ENCODE measurements at regions of chr12 and their contacts with region 1.

Region 1: DNA sequence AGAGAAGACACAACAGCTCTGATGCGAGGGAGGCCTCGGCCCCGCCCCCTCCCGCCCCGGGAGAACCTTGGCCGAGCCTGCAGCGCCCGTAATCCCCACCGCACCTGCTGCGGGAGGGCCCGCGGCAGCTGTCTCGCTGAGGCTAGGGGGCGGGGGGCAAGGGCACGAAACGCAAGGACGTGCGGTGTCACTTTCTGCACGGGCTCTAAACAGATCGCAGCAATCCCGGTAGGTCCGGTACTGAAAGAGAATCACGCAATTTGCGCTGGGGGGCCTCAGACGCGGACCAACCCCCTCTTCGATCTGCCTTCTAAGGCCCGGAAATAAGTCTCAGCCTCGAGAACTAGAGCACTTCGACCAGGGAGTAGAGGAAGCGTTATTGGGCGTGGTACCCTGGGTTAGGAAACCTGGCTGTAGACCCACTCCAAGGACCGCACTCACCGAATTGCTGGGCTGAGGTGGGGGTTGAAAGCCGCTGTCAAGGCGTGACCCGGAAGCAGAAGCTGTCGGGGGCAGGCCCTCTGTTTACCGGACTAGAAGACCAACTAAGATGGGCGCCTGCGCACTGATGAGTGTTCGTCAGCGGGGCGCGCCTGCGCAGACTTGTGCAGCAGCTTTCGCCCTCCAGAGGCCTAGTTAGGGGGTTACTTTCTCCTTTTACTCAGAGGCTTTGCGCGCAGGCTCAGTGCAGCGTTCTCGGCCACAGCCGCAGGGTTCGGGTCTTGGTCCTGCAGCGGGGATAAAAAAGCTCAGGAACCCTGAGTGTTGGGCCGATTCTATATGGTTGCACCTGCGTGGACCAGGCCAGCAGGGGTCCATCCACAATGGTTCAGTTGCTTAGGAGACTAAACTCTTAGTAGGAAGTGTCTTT is at the start of gene ASB8:
- H3K4me3 ChIP-seq: peak within 1 kb of the TSS; percentile 86
- H3K27ac ChIP-seq: peak within 1 kb of the TSS; percentile 70
- H3K4me1 ChIP-seq: no peaks in the 10 kb centered on the region
- CTCF ChIP-seq: peak; percentile 45

Region 2: GRCh38 chr12:47812797-47813510 is 344.3 kb before region 1 on chr12:
- CTCF ChIA-PET with region 1: no interaction called
- POLR2A ChIA-PET with region 1: no interaction called
- H3K4me3 ChIP-seq: peak overlapping the region; percentile 28
- H3K27ac ChIP-seq: peak overlapping the region; percentile 66
- H3K4me1 ChIP-seq: peaks cover 27% of the 10 kb centered on the region
- CTCF ChIP-seq: no peak

Region 3: GRCh38 chr12:48119078-48119833 is 38.0 kb before region 1 on chr12 and contains the start of gene PFKM:
- CTCF ChIA-PET with region 1: no interaction called
- POLR2A ChIA-PET with region 1: interaction called, 20 read pairs
- H3K4me3 ChIP-seq: peak within 1 kb of the TSS; percentile 59
- H3K27ac ChIP-seq: peak within 1 kb of the TSS; percentile 32
- H3K4me1 ChIP-seq: peaks cover 14% of the 10 kb centered on the region
- CTCF ChIP-seq: no peak

Region 4: GRCh38 chr12:48279101-48279500 is 121.8 kb after region 1 on chr12:
- CTCF ChIA-PET with region 1: no interaction called
- POLR2A ChIA-PET with region 1: no interaction called
- H3K4me3 ChIP-seq: no peak overlapping the region
- H3K27ac ChIP-seq: no peak overlapping the region
- H3K4me1 ChIP-seq: no peaks in the 10 kb centered on the region
- CTCF ChIP-seq: no peak